Ascending aorta (tissue), 2 donors: ENCODE measurements at regions of chr9 and their contacts with region 1.

Region 1: GRCh38 chr9:85610074-85610860 is 131.5 kb downstream of the AGTPBP1 start:
- DNase-seq: no peak
- H3K4me3 ChIP-seq: peak overlapping the region in 1 of 2 donors; percentile 34
- H3K27ac ChIP-seq: no peak overlapping the region
- H3K4me1 ChIP-seq: no peaks in the 10 kb centered on the region
- H3K27me3 ChIP-seq: no peaks in the 10 kb centered on the region
- CTCF ChIP-seq: peak; percentile 63 to 83 (median 76)

Region 2: DNA sequence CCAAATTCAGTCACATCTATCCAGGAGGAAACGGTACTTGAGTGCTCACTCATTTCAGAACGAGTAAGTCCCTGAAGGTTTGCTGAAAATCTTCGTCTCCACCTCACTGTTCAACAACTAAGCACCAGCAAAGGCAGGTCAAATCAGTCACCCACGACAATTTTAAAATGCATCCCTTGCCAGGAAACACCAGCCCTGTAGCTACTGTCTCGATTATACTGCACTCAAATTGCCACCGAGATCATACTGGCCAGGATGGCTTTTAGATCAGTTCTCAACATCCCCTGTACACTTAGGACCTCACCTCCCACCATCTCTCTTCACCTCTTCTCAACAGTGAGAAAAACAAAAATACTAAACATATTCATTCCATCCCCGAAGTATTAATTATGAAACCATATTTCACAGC is 167.1 kb before region 1 on chr9:
- intact Hi-C with region 1: no loop called
- DNase-seq: no peak
- H3K4me3 ChIP-seq: no peak overlapping the region
- H3K27ac ChIP-seq: no peak overlapping the region
- H3K4me1 ChIP-seq: no peaks in the 10 kb centered on the region
- H3K27me3 ChIP-seq: no peaks in the 10 kb centered on the region
- CTCF ChIP-seq: no peak

Region 3: DNA sequence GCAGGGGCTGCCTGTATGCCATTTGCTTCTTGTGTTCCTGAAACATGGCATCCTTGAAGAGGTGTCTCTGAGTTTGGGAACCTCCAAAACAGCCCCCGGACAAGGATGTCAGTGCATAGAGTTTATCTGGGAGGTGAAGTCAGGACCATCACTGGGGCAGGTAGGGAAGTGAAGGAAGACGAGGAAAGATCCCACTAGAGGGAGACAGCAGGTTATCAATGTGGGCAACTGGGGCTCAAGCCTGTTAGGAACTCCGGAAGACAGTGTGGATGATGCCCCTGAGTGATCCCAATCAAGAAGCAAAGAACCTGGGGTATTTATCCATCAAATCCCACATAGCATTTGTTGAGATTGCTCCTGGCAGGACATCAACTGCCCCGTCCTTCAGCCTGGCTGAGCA is 101.7 kb before region 1 on chr9:
- intact Hi-C with region 1: loop called (anchors 1 kb)
- DNase-seq: no peak
- H3K4me3 ChIP-seq: no peak overlapping the region
- H3K27ac ChIP-seq: no peak overlapping the region
- H3K4me1 ChIP-seq: no peaks in the 10 kb centered on the region
- H3K27me3 ChIP-seq: no peaks in the 10 kb centered on the region
- CTCF ChIP-seq: no peak